ENCODE measurements at regions of chrX and their contacts with region 1.

Region 1: GRCh38 chrX:97685753-97686152 is 802.0 kb downstream of the RPA4 start:
- DNase-seq: peak; percentile 53
- H3K4me3 ChIP-seq: no peak overlapping the region
- H3K27ac ChIP-seq: no peak overlapping the region
- H3K4me1 ChIP-seq: no peaks in the 10 kb centered on the region
- CTCF ChIP-seq: peak; percentile 84

Region 2: GRCh38 chrX:97026406-97026805 is 659.3 kb before region 1 on chrX:
- CTCF ChIA-PET with region 1: no interaction called
- POLR2A ChIA-PET with region 1: no interaction called
- intact Hi-C with region 1: loop called (anchors 5 kb)
- DNase-seq: peak; percentile 4
- H3K4me3 ChIP-seq: no peak overlapping the region
- H3K27ac ChIP-seq: no peak overlapping the region
- H3K4me1 ChIP-seq: no peaks in the 10 kb centered on the region
- CTCF ChIP-seq: peak; percentile 52; the same call in 1 of the 2 replicates

Measured in OCI-LY7 (cell line).